B cell (primary cell): ENCODE measurements at regions of chr3 and their contacts with region 1.

Region 1: GRCh38 chr3:142723968-142724681 is at the start of gene TRPC1:
- DNase-seq: peak; percentile 88
- ATAC-seq: peak; percentile 93
- H3K4me3 ChIP-seq: peak within 1 kb of the TSS; percentile 44 to 76 (median 65)
- H3K4me3 Mint-ChIP-seq: peak within 1 kb of the TSS; percentile 92
- H3K27ac ChIP-seq: peak within 1 kb of the TSS in 1 of 2 donors; percentile 41
- H3K27ac Mint-ChIP-seq: peak within 1 kb of the TSS; percentile 81
- H3K4me1 ChIP-seq: peaks cover 8 to 11% of the 10 kb centered on the region in 2 donors
- H3K4me1 Mint-ChIP-seq: peaks cover 13% of the 10 kb centered on the region
- H3K27me3 ChIP-seq: peaks cover 0 to 13% (median 10%) of the 10 kb centered on the region in 4 experiments
- H3K27me3 Mint-ChIP-seq: peaks cover 33% of the 10 kb centered on the region
- CTCF ChIP-seq: no peak
- total RNA-seq, gene TRPC1: 3.3 and 3.8 TPM in 2 replicates

Region 2: DNA sequence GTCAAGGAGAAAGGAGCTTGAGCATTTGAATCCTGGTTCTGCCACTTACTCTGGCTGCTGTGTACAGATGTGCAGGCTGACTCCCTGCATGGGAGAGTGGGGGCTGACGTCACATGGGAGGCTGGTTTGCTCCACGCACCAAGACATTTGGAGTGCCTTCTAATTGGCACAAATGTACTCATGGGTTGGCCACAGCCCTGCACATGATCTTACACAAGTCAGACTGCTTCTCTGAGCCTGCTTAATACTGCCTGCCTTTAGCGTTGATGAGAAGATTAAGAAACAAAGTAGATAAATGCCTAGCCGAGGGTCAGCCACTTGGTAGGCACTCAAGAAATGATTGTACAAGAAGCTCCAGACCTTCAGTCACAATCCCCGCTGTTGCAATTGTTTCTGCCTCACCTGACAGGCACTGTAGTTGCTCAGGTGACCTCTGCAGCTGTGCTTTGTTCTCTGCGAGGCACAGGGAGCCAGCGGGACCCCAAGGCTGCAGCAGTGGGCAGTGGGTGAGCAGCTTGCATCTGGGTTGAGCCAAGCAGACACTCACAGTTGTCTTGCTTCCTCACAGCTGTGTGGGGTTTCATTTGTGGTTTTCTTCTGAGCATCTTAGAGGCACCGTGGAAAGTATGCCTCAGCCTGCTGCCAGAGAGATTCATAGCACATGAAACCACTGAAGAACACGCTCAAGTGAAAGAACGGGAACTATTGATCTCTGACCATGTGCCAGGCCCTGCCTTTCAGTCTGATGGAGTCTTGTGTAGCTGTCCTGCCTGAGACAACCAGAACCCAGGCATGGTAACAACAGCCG is 927.8 kb before region 1 on chr3:
- CTCF ChIA-PET with region 1: no interaction called
- POLR2A ChIA-PET with region 1: no interaction called
- intact Hi-C with region 1: loop called (anchors 5 kb)
- DNase-seq: peak; percentile 68
- ATAC-seq: peak; percentile 88
- H3K4me3 ChIP-seq: peak overlapping the region in 3 of 5 experiments; percentile 53 to 62 (median 61)
- H3K4me3 Mint-ChIP-seq: peak overlapping the region; percentile 85
- H3K27ac ChIP-seq: peak overlapping the region; percentile 19 to 50
- H3K27ac Mint-ChIP-seq: peak overlapping the region; percentile 93
- H3K4me1 ChIP-seq: peaks cover 21 to 26% of the 10 kb centered on the region in 2 donors
- H3K4me1 Mint-ChIP-seq: peaks cover 34% of the 10 kb centered on the region
- H3K27me3 ChIP-seq: no peaks in the 10 kb centered on the region
- H3K27me3 Mint-ChIP-seq: no peaks in the 10 kb centered on the region
- CTCF ChIP-seq: no peak

Region 3: GRCh38 chr3:142595951-142596725 is 128.0 kb before region 1 on chr3 and contains the start of gene PLS1:
- CTCF ChIA-PET with region 1: no interaction called
- POLR2A ChIA-PET with region 1: no interaction called
- intact Hi-C with region 1: loop called (anchors 5 kb)
- DNase-seq: peak; percentile 87
- ATAC-seq: peak; percentile 87
- H3K4me3 ChIP-seq: peak within 1 kb of the TSS; percentile 68 to 77 (median 72)
- H3K4me3 Mint-ChIP-seq: peak within 1 kb of the TSS; percentile 99
- H3K27ac ChIP-seq: peak within 1 kb of the TSS in 1 of 2 donors; percentile 27
- H3K27ac Mint-ChIP-seq: peak within 1 kb of the TSS; percentile 87
- H3K4me1 ChIP-seq: peaks cover 10 to 15% of the 10 kb centered on the region in 2 donors
- H3K4me1 Mint-ChIP-seq: peaks cover 19% of the 10 kb centered on the region
- H3K27me3 ChIP-seq: peaks cover 0 to 7% (median 2%) of the 10 kb centered on the region in 4 experiments
- H3K27me3 Mint-ChIP-seq: peaks cover 12% of the 10 kb centered on the region
- CTCF ChIP-seq: no peak
- total RNA-seq, gene PLS1: 0.73 and 0.74 TPM in 2 replicates

Region 4: GRCh38 chr3:143090486-143090885 is 366.4 kb after region 1 on chr3:
- CTCF ChIA-PET with region 1: no interaction called
- POLR2A ChIA-PET with region 1: no interaction called
- intact Hi-C with region 1: no loop called
- DNase-seq: no peak
- ATAC-seq: no peak
- H3K4me3 ChIP-seq: no peak overlapping the region
- H3K4me3 Mint-ChIP-seq: no peak overlapping the region
- H3K27ac ChIP-seq: no peak overlapping the region
- H3K27ac Mint-ChIP-seq: no peak overlapping the region
- H3K4me1 ChIP-seq: no peaks in the 10 kb centered on the region
- H3K4me1 Mint-ChIP-seq: no peaks in the 10 kb centered on the region
- H3K27me3 ChIP-seq: no peaks in the 10 kb centered on the region
- H3K27me3 Mint-ChIP-seq: no peaks in the 10 kb centered on the region
- CTCF ChIP-seq: no peak